Activated naive CD4-positive, alpha-beta T cell treated with anti-CD3 and anti-CD28 coated beads for 36 hours (primary cell): ENCODE measurements at regions of chr2 and their contacts with region 1.

Region 1: DNA sequence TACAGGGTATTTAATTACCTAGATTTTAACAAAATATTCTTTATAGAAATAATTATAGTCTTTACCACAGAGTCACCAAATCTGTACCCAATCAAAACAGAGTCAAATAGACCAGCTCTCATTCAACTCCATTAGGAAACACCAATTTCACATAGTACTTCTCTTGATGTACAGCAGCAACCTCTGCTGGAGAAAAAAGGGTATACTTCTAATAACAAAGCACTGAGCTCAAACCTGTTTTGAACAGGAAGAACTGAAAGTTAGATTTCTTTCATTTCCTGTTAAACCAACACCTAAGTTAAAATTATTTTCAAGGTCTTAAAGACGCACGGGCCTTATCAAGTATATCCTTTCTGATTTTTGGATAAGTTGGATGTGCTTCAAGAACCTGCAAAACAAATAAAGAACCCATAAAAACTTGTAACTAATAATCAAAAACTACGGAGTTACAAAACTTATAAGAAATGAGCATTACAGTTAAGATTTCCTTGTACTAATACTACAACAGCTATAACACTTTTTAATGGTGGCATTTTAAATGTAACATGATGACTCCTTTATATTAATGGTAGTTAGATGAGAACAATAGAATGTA is 79.0 kb downstream of the TTC21B start:
- DNase-seq: peak; percentile 13
- H3K4me3 Mint-ChIP-seq: no peak overlapping the region
- H3K27ac Mint-ChIP-seq: no peak overlapping the region
- H3K4me1 Mint-ChIP-seq: peaks cover 26% of the 10 kb centered on the region
- H3K27me3 Mint-ChIP-seq: no peaks in the 10 kb centered on the region

Region 2: GRCh38 chr2:165239230-165239629 is 635.3 kb before region 1 on chr2 and contains the start of gene SCN2A:
- CTCF ChIA-PET with region 1: interaction called, 4 read pairs
- intact Hi-C with region 1: loop called (anchors 1 kb)
- DNase-seq: no peak
- H3K4me3 Mint-ChIP-seq: no peak within 1 kb of the TSS
- H3K27ac Mint-ChIP-seq: no peak within 1 kb of the TSS
- H3K4me1 Mint-ChIP-seq: no peaks in the 10 kb centered on the region
- H3K27me3 Mint-ChIP-seq: peaks cover 16% of the 10 kb centered on the region
- total RNA-seq, gene SCN2A: 0.10 to 0.14 TPM

Region 3: DNA sequence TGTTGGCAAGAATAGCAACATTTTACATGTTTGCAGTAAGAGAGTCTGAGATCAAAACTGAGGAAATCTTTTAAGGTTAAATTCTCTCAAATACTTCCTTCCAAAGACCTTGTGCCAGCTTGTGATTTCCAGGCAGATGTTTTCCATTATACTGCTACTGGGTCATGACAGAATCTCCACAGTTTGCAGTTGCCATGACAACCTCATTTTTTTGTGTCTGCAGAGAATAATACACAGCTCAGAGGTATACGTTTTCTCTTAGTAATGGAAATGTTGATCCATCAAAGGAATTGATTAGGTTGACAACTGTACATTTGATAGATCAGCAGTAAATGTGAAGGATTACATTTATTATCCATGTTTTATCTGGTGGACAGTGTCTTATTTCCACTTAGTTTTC is 434.2 kb before region 1 on chr2:
- CTCF ChIA-PET with region 1: no interaction called
- intact Hi-C with region 1: loop called (anchors 5 kb)
- DNase-seq: no peak
- H3K4me3 Mint-ChIP-seq: no peak overlapping the region
- H3K27ac Mint-ChIP-seq: no peak overlapping the region
- H3K4me1 Mint-ChIP-seq: peaks cover 19% of the 10 kb centered on the region
- H3K27me3 Mint-ChIP-seq: no peaks in the 10 kb centered on the region

Region 4: GRCh38 chr2:165698444-165698894 is 176.1 kb before region 1 on chr2:
- CTCF ChIA-PET with region 1: interaction called, 3 read pairs
- intact Hi-C with region 1: loop called (anchors 1 kb)
- DNase-seq: peak; percentile 20
- H3K4me3 Mint-ChIP-seq: no peak overlapping the region
- H3K27ac Mint-ChIP-seq: no peak overlapping the region
- H3K4me1 Mint-ChIP-seq: no peaks in the 10 kb centered on the region
- H3K27me3 Mint-ChIP-seq: peaks cover 8% of the 10 kb centered on the region

Region 5: DNA sequence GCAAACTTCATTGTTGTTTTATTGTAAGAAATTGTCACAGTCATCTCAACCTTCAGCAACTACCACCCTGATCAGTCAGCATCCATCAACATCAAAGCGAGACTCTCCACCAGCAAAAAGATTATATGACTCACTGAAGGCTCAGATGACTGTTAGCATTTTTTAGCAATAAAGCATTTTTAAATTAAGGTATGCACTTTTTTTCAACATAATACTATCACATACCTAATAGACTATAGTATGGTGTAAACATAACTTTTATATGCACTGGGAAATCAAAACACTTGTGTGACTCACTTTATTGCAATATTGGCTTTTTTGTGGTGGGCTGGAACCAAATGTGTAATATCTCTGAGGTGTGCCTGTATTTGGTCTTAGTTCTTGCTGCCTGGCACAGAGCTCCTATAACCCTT is 237.7 kb after region 1 on chr2:
- CTCF ChIA-PET with region 1: no interaction called
- intact Hi-C with region 1: loop called (anchors 2 kb)
- DNase-seq: peak; percentile 18
- H3K4me3 Mint-ChIP-seq: no peak overlapping the region
- H3K27ac Mint-ChIP-seq: no peak overlapping the region
- H3K4me1 Mint-ChIP-seq: no peaks in the 10 kb centered on the region
- H3K27me3 Mint-ChIP-seq: no peaks in the 10 kb centered on the region